RWPE1 (cell line): ENCODE measurements at regions of chr7 and their contacts with region 1.

Region 1: DNA sequence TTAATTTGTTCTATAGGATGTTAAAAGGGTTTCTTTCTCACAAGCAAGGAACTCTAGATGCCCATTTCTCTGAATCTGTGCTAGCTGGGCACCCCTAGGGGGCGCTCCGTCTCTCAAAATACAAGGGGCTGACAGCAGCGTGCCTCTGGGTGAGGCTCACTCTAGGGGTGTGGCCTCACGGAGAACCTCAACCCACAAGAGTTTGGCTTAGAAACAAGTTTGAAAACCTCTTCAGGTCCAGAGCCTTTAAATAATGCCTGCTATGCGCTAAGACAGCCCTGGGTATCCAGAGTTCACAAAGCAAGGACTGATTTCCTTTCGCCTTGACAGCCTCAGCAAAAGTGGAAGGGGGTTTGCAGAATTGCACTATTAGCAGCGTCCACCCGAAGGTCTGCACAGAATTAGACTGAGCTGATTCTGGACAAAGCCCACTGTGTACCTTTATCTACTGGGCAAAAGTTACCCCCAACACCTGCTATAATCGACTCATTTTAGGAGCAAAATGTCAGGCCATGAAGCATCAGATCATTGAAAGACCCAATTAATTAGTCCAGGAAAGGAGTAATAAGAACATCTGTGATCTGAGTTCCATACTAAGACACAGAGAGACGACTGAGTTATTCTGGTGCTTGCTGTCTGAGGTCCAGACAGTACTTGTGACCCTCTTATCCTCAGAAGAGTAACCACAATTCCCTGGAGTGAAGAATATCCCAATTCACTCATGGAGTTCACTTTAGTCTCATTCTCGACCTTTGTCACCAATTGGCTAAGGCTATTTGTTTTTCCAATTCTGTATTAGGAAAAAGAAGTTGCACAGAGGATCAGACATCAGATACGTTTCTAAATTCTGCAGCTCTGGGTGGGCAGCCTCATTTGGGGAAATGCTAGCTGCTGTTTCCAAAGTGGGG is 574 bp upstream of the CPED1 start:
- DNase-seq: peak; percentile 77
- H3K27ac ChIP-seq: no peak overlapping the region
- CTCF ChIP-seq: peak; percentile 93

Region 2: DNA sequence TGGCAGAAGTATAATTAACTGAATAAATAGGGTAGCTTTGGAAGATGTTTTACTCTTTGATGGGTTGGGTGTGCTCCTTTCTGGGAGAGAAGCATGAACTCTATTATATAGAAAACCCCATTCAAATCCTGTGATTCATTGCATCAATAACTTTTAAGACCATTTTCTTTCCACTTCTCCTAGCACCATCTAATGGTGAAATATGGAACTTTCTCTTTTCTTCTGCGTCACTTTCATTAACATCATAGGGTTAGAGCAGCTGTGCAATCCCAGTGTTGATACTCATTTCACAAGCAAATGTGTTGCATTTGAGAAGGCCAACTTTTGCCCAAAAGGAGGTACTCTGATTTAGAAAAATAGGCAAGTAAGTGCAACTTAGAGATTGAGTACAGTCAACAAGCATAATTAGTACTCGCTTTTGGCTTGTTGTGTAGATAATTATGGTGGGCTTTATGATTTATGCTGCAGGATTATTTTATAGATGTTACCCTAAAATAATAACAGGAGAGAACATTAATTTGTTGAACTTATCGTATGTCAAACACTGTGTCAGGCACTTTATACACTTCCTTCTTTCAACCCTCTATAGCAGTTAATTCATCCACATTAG is 93.5 kb after region 1 on chr7:
- CTCF ChIA-PET with region 1: interaction called, 20 read pairs
- POLR2A ChIA-PET with region 1: interaction called, 3 read pairs
- DNase-seq: peak; percentile 20
- H3K27ac ChIP-seq: no peak overlapping the region
- CTCF ChIP-seq: peak; percentile 90